Transverse colon (tissue), 4 donors: ENCODE measurements at regions of chr6 and their contacts with region 1.

Region 1: GRCh38 chr6:22073516-22074198 is 223.2 kb downstream of the PRL start:
- DNase-seq: no peak
- H3K4me3 ChIP-seq: no peak overlapping the region
- H3K27ac ChIP-seq: no peak overlapping the region
- H3K4me1 ChIP-seq: peaks cover 0 to 9% (median 0%) of the 10 kb centered on the region in 4 donors
- H3K27me3 ChIP-seq: no peaks in the 10 kb centered on the region
- CTCF ChIP-seq: no peak
- EP300 ChIP-seq: no peak
- POLR2A ChIP-seq: no peak

Region 2: GRCh38 chr6:22095836-22096235 is 22.2 kb after region 1 on chr6:
- in situ Hi-C with region 1: no loop called
- intact Hi-C with region 1: loop called (anchors 2 kb)
- DNase-seq: no peak
- H3K4me3 ChIP-seq: no peak overlapping the region
- H3K27ac ChIP-seq: no peak overlapping the region
- H3K4me1 ChIP-seq: no peaks in the 10 kb centered on the region
- H3K27me3 ChIP-seq: no peaks in the 10 kb centered on the region
- CTCF ChIP-seq: no peak
- EP300 ChIP-seq: no peak
- POLR2A ChIP-seq: no peak

Region 3: GRCh38 chr6:22133357-22133756 is 59.7 kb after region 1 on chr6:
- in situ Hi-C with region 1: no loop called
- intact Hi-C with region 1: no loop called
- DNase-seq: no peak
- H3K4me3 ChIP-seq: no peak overlapping the region
- H3K27ac ChIP-seq: no peak overlapping the region
- H3K4me1 ChIP-seq: no peaks in the 10 kb centered on the region
- H3K27me3 ChIP-seq: no peaks in the 10 kb centered on the region
- CTCF ChIP-seq: no peak
- EP300 ChIP-seq: no peak
- POLR2A ChIP-seq: no peak

Region 4: GRCh38 chr6:22526736-22527135 is 453.1 kb after region 1 on chr6:
- in situ Hi-C with region 1: no loop called
- intact Hi-C with region 1: no loop called
- DNase-seq: no peak
- H3K4me3 ChIP-seq: no peak overlapping the region
- H3K27ac ChIP-seq: no peak overlapping the region
- H3K4me1 ChIP-seq: no peaks in the 10 kb centered on the region
- H3K27me3 ChIP-seq: no peaks in the 10 kb centered on the region
- CTCF ChIP-seq: no peak
- EP300 ChIP-seq: no peak
- POLR2A ChIP-seq: no peak